WTC11 (cell line): ENCODE measurements at regions of chr10 and their contacts with region 1.

Region 1: GRCh38 chr10:69408318-69409175 is 8.2 kb downstream of the TACR2 start:
- DNase-seq: peak; percentile 94
- ATAC-seq: peak; percentile 71
- H3K4me3 Mint-ChIP-seq: peak overlapping the region; percentile 49
- H3K27ac Mint-ChIP-seq: peak overlapping the region; percentile 72; the same call in 1 of the 2 replicates
- H3K4me1 Mint-ChIP-seq: peaks cover 42% of the 10 kb centered on the region
- H3K27me3 Mint-ChIP-seq: peaks cover 7% of the 10 kb centered on the region
- CTCF ChIP-seq: peak; percentile 62

Region 2: DNA sequence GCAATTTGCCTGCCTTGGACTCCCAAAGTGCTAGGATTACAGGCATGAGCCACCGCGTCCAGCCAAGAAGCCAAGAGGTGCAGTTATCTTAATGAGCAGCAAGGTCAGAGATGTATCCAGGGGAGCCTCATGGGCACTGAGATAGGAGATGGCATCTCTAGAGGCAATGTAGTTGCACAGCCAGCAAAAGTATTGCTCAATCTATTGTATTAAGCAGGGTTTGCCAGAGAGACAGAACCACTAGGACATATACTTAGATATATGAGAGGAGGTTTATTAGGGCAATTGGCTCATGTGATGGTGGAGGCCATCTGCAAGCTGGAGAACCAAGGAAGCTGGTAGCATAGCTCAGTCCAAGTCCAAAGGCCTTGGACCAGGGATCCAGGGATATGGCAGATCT is 300.8 kb before region 1 on chr10:
- CTCF ChIA-PET with region 1: no interaction called
- POLR2A ChIA-PET with region 1: no interaction called
- DNase-seq: no peak
- ATAC-seq: no peak
- H3K4me3 Mint-ChIP-seq: no peak overlapping the region
- H3K27ac Mint-ChIP-seq: no peak overlapping the region
- H3K4me1 Mint-ChIP-seq: no peaks in the 10 kb centered on the region
- H3K27me3 Mint-ChIP-seq: no peaks in the 10 kb centered on the region
- CTCF ChIP-seq: no peak

Region 3: DNA sequence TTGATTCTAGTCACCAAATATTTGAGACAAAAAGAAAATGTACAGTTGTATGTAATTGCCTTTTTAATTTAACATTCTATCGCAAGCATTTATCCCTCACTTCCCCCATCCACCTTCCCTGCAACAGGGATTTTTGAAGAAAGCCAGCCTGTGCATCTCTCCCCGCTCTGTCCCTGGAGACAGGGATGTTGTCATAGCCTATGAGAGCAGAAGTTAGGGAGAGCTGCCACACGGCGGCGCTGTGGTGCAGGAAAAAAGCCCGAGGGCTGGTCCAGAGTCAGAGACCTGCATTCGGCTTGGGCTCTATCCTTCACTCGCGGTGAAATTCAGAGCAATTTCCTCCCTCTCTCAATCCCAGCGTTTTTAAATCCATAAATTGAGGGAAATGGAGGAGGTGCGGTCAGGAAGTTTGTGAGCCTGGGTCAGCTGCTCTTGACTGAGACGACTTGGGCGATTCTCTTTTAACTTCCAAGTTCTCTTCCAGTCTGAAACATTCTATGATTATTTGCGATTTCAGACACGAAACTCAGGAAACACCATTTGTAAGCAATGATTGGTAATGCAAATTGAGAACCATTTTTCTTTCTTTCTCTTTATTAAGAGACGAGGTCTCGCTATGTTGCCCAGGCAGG is 170.9 kb before region 1 on chr10:
- CTCF ChIA-PET with region 1: interaction called, 18 read pairs
- POLR2A ChIA-PET with region 1: interaction called, 4 read pairs
- DNase-seq: peak; percentile 94
- ATAC-seq: peak; percentile 96
- H3K4me3 Mint-ChIP-seq: no peak overlapping the region
- H3K27ac Mint-ChIP-seq: no peak overlapping the region
- H3K4me1 Mint-ChIP-seq: peaks cover 28% of the 10 kb centered on the region
- H3K27me3 Mint-ChIP-seq: no peaks in the 10 kb centered on the region; the same call in 1 of the 2 replicates
- CTCF ChIP-seq: peak; percentile 96

Region 4: DNA sequence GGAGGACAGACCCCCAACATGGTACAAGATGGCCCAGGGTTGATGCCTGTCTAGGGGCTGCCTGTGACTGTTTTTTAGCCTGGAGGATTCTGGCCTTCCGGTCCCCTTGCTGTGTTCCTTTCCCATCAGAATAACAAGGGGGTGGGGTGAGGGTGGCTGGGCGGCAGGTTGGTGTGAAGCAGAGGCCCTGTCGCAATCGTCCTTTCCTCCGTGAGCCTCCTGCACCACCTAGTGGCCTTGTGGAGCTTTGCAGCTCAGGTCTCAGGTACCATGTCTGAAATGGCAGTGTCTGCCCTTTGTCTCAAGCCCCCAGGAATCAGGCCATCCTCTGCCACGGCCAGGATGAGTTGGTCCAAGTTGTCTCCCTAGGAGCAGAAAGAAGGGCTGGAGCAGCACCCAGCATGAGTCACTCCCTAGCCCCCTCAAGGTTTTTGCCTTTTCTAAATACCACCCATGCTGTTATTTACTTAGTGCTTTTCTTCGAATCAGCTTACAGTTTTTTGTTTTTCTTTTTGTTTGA is 16.0 kb before region 1 on chr10:
- CTCF ChIA-PET with region 1: interaction called, 36 read pairs
- POLR2A ChIA-PET with region 1: interaction called, 7 read pairs
- DNase-seq: peak; percentile 92
- ATAC-seq: peak; percentile 88
- H3K4me3 Mint-ChIP-seq: no peak overlapping the region
- H3K27ac Mint-ChIP-seq: peak overlapping the region; percentile 78
- H3K4me1 Mint-ChIP-seq: peaks cover 42% of the 10 kb centered on the region
- H3K27me3 Mint-ChIP-seq: no peaks in the 10 kb centered on the region
- CTCF ChIP-seq: peak; percentile 97

Region 5: GRCh38 chr10:69464801-69465401 is 56.4 kb after region 1 on chr10:
- CTCF ChIA-PET with region 1: interaction called, 13 read pairs
- POLR2A ChIA-PET with region 1: no interaction called
- DNase-seq: no peak
- ATAC-seq: no peak; the same call in 1 of the 2 replicates
- H3K4me3 Mint-ChIP-seq: no peak overlapping the region
- H3K27ac Mint-ChIP-seq: no peak overlapping the region
- H3K4me1 Mint-ChIP-seq: peaks cover 19% of the 10 kb centered on the region
- H3K27me3 Mint-ChIP-seq: no peaks in the 10 kb centered on the region
- CTCF ChIP-seq: no peak

Region 6: DNA sequence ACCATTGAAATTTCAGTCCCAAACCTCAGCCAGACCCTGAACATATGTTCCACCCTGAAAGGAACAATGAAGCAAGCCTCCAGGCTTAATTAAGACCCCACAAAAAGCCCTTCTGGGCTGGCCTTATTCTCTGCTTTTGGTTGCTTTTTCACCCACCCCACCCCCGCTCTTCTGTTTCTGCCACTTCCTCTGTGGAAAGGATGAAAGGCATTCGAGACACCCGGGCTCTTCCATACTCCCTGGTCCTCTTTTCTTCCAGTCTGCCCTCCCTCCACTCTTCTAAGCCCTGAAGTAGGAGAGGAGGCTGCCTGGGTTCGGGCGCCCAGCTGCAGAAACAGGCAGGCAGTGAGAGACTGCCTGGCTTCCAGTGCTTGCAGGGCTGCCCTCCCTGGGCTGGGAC is 212.1 kb after region 1 on chr10:
- CTCF ChIA-PET with region 1: no interaction called
- POLR2A ChIA-PET with region 1: no interaction called
- DNase-seq: no peak
- ATAC-seq: 0 out of 2 replicates have a peak, but pooled peaks have one; percentile 24
- H3K4me3 Mint-ChIP-seq: no peak overlapping the region
- H3K27ac Mint-ChIP-seq: no peak overlapping the region
- H3K4me1 Mint-ChIP-seq: peaks cover 5% of the 10 kb centered on the region; the same call in 1 of the 2 replicates
- H3K27me3 Mint-ChIP-seq: peaks cover 10% of the 10 kb centered on the region
- CTCF ChIP-seq: no peak

Region 7: GRCh38 chr10:69644658-69645295 is 236.2 kb after region 1 on chr10:
- CTCF ChIA-PET with region 1: interaction called, 11 read pairs
- POLR2A ChIA-PET with region 1: no interaction called
- DNase-seq: peak; percentile 77
- ATAC-seq: peak; percentile 75
- H3K4me3 Mint-ChIP-seq: no peak overlapping the region
- H3K27ac Mint-ChIP-seq: no peak overlapping the region
- H3K4me1 Mint-ChIP-seq: peaks cover 30% of the 10 kb centered on the region
- H3K27me3 Mint-ChIP-seq: no peaks in the 10 kb centered on the region; the same call in 1 of the 2 replicates
- CTCF ChIP-seq: peak; percentile 72